ENCODE measurements at regions of chr16 and their contacts with region 1.

Region 1: GRCh38 chr16:66924527-66925321 is 611 bp downstream of the RRAD start:
- DNase-seq: peak; percentile 65
- H3K4me3 Mint-ChIP-seq: peak overlapping the region; percentile 20
- H3K27ac Mint-ChIP-seq: no peak overlapping the region
- H3K4me1 Mint-ChIP-seq: peaks cover 11% of the 10 kb centered on the region
- H3K27me3 Mint-ChIP-seq: peaks cover 30% of the 10 kb centered on the region

Region 2: DNA sequence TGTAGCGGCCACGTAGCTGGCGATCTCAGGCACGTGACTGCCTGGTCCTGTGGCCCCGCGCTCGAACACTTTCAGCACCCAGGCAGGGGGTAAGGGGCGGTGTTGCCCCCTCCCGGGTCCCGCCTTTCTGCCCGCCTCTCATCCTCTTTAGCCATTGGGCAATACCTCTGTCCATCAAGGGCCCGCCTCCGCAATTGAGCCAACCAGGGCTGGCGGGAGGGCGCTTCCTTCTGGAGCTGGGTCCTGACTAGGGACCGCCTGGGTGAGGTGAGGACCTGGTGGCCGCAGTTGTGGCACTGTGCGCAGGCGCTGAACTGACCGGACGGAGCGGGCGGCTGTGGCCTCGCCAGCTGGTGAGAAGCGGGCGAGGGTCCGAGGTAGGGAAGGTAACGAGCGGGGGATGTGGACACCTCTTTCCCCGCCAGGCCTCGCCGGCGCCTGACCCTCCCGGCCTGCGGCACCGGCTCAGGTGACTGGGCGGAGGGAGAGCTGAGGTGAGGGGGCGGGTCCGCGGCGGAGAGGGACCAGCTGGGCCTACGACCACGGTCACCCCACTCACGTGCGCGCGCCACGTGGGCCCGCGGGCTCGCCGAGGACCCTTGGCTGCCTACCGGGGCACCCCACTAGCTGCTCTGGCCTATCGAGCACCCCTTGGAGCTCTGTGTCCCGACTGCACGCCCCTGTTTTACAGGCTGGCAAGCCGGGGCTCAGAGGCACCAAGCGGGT is 44.3 kb before region 1 on chr16 and contains the start of gene PDP2:
- CTCF ChIA-PET with region 1: interaction called, 7 read pairs
- POLR2A ChIA-PET with region 1: interaction called, 3 read pairs
- intact Hi-C with region 1: loop called (anchors 2 kb)
- DNase-seq: peak; percentile 95
- H3K4me3 Mint-ChIP-seq: peak within 1 kb of the TSS; percentile 94
- H3K27ac Mint-ChIP-seq: peak within 1 kb of the TSS; percentile 84
- H3K4me1 Mint-ChIP-seq: peaks cover 50% of the 10 kb centered on the region
- H3K27me3 Mint-ChIP-seq: no peaks in the 10 kb centered on the region
- total RNA-seq, gene PDP2: 42.4 to 45.5 TPM

Measured in activated CD4-positive, alpha-beta memory T cell treated with anti-CD3 and anti-CD28 coated beads for 36 hours (primary cell).